Mammary epithelial cell (primary cell): ENCODE measurements at regions of chr1 and their contacts with region 1.

Region 1: GRCh38 chr1:28602536-28603439 is 10.7 kb downstream of the RAB42 start:
- DNase-seq: peak; percentile 78
- H3K4me3 ChIP-seq: no peak overlapping the region
- H3K27ac ChIP-seq: peak overlapping the region; percentile 63
- H3K4me1 ChIP-seq: peaks cover 27% of the 10 kb centered on the region
- H3K27me3 ChIP-seq: no peaks in the 10 kb centered on the region
- CTCF ChIP-seq: peak; percentile 66 to 76

Region 2: DNA sequence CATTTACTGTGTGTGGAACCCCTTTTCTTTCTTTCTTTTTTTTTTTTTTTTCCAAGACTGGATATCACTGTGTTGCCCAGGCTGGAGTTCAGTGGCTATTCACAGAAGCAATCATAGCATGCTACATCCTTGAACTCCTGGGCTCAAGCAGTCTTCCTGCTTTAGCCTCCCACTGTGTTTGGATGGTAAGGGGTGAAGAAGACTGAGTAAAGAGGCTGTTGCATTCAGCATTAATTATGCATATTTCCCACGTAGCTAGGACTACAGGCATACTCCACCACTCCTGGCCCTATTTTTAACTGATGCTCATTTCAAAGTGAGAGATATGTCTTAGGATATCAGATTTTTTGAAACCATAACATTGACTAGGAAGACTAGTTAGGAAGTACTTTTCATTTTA is 193.7 kb before region 1 on chr1:
- CTCF ChIA-PET with region 1: no interaction called
- dilution Hi-C with region 1: loop called (anchors 5 kb)
- in situ Hi-C with region 1: loop called in 1 of 2 experiments (anchors 10 kb)
- intact Hi-C with region 1: loop called (anchors 1 kb)
- DNase-seq: no peak
- H3K4me3 ChIP-seq: no peak overlapping the region
- H3K27ac ChIP-seq: no peak overlapping the region
- H3K4me1 ChIP-seq: no peaks in the 10 kb centered on the region
- H3K27me3 ChIP-seq: no peaks in the 10 kb centered on the region
- CTCF ChIP-seq: no peak

Region 3: DNA sequence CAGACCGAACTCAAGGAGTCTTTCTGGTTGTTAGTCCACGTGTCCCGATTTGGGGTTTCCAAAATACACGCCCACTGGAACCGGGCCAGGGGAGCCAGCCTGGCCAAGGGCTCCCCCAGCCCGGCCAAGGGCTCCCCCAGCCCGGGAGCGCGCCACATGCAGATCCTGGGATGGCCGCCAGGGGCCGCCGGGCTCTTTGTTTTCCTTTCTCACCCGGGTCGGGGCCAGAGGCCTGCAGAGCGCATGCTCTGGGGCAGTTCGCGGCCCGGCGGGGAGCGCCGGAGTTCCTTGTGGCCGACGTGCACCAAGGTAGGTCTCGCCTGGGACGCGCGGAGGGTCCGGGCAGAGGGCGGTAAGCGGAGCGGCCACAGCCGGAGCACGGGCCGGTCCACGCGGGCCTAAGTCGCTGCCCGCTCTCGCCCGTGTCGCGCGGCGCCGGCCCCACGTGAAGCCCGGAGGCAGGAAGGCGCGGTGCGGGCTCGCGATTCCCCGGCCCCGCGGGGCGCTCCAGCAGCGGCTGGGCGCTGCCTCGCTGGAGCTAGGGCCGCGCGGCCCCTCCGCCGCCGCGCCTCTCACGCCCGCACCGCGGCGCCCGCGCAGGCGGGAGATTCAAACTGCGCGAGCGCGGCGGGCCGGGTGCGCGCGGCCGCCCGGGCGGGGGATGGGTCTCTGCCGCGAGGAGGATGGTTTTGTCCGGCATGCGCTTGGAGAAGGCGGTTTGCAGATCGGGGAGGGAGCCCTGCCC is 84.6 kb before region 1 on chr1:
- CTCF ChIA-PET with region 1: interaction called, 14 read pairs
- dilution Hi-C with region 1: no loop called
- in situ Hi-C with region 1: loop called in 1 of 2 experiments (anchors 5 kb)
- intact Hi-C with region 1: loop called (anchors 1 kb)
- DNase-seq: peak; percentile 85
- H3K4me3 ChIP-seq: peak overlapping the region; percentile 60 to 68 (median 61)
- H3K27ac ChIP-seq: peak overlapping the region; percentile 57
- H3K4me1 ChIP-seq: peaks cover 12% of the 10 kb centered on the region
- H3K27me3 ChIP-seq: no peaks in the 10 kb centered on the region
- CTCF ChIP-seq: peak; percentile 63 to 98

Region 4: GRCh38 chr1:28528356-28528755 is 74.4 kb before region 1 on chr1:
- CTCF ChIA-PET with region 1: no interaction called
- dilution Hi-C with region 1: no loop called
- in situ Hi-C with region 1: no loop called
- intact Hi-C with region 1: no loop called
- DNase-seq: no peak
- H3K4me3 ChIP-seq: no peak overlapping the region
- H3K27ac ChIP-seq: no peak overlapping the region
- H3K4me1 ChIP-seq: no peaks in the 10 kb centered on the region
- H3K27me3 ChIP-seq: no peaks in the 10 kb centered on the region
- CTCF ChIP-seq: no peak

Region 5: GRCh38 chr1:28581536-28582247 is 21.1 kb before region 1 on chr1:
- CTCF ChIA-PET with region 1: interaction called, 5 read pairs
- dilution Hi-C with region 1: no loop called
- in situ Hi-C with region 1: no loop called
- intact Hi-C with region 1: loop called (anchors 2 kb)
- DNase-seq: peak; percentile 95
- H3K4me3 ChIP-seq: peak overlapping the region; percentile 73 to 96 (median 88)
- H3K27ac ChIP-seq: peak overlapping the region; percentile 87
- H3K4me1 ChIP-seq: peaks cover 23% of the 10 kb centered on the region
- H3K27me3 ChIP-seq: no peaks in the 10 kb centered on the region
- CTCF ChIP-seq: peak in 1 of 2 donors; percentile 2

Region 6: DNA sequence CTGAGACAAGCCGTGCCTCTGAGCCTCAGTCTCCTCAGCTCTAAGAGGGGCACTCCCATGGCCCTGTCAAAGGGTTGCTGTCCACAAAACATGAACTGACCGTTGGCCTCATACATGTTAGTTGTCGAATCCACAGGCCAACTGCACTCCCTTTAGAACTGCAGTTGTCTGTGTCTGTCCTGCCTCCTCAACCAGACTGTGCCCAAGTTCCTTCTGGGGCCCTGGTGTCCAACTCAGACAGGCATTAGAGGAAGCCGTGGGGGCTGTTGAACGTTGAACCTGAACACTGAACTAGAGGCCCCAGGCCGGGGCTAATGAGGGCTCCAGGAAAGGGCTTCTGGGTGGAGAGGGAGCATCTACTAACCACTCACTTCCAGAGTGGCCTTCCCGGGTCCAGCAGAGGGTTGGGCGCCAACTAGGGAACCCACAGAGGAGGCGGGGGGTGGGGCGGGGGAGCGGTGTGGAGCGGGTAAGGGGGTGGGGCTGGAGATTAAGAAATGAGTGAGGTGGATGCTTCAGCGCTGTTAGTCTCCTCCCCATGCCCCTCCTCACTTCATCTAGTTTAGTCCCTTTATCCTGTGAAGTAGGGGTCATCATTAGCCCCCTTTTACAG is 11.0 kb before region 1 on chr1 and contains the start of gene RAB42:
- CTCF ChIA-PET with region 1: no interaction called
- dilution Hi-C with region 1: no loop called
- in situ Hi-C with region 1: no loop called
- intact Hi-C with region 1: no loop called
- DNase-seq: no peak
- H3K4me3 ChIP-seq: peak within 1 kb of the TSS in 2 of 3 experiments; percentile 7 to 12
- H3K27ac ChIP-seq: no peak within 1 kb of the TSS
- H3K4me1 ChIP-seq: peaks cover 8% of the 10 kb centered on the region
- H3K27me3 ChIP-seq: no peaks in the 10 kb centered on the region
- CTCF ChIP-seq: no peak
- total RNA-seq, gene RAB42: 0.17 TPM in 1 of 2 donors, not detected in the other

Region 7: DNA sequence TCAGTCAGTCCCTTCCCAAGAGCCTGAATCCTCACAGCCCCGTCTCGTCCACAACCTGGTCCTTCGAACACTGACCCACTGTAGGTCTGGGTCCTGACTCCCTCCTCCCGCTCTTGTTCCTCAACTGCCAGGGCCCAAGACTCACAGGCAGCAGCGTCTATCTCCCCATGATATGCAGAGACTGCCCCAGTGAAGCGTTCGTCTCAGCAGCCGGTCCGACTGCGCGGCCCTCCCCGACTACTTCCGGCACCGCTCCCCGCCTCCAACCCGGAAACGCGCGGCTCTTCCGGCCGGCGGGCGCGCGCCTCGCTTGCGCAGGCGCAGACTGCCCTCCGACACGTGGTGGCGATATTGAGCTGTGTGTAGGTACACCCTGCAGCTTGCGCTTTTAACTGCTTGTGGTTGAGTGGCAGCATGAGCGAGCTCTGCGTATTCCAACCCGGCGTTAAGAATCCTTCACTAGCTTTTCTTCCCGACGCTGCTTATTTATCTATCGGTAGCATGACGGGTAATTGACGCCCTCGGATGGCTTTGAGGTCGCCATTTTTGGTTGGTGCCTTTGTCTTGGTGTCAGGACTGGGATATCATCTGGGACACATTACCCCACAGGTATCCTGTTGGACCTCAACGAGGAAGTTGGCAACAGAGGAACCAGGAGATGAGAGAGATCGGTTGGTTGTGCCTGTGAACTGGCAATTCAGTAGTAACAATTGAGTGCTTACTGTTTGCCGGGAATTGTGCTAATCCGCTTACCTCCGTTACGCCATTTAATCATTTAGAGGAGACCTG is 40.3 kb after region 1 on chr1 and contains the start of gene TAF12:
- CTCF ChIA-PET with region 1: no interaction called
- dilution Hi-C with region 1: no loop called
- in situ Hi-C with region 1: no loop called
- intact Hi-C with region 1: no loop called
- DNase-seq: peak; percentile 97
- H3K4me3 ChIP-seq: peak within 1 kb of the TSS; percentile 52 to 72 (median 70)
- H3K27ac ChIP-seq: peak within 1 kb of the TSS; percentile 79
- H3K4me1 ChIP-seq: peaks cover 15% of the 10 kb centered on the region
- H3K27me3 ChIP-seq: no peaks in the 10 kb centered on the region
- CTCF ChIP-seq: peak in 1 of 2 donors; percentile 55
- total RNA-seq, gene TAF12: 22.0 to 27.1 TPM

Region 8: GRCh38 chr1:28815533-28816185 is 212.9 kb after region 1 on chr1:
- CTCF ChIA-PET with region 1: no interaction called
- dilution Hi-C with region 1: loop called (anchors 5 kb)
- in situ Hi-C with region 1: no loop called
- intact Hi-C with region 1: no loop called
- DNase-seq: no peak
- H3K4me3 ChIP-seq: no peak overlapping the region
- H3K27ac ChIP-seq: no peak overlapping the region
- H3K4me1 ChIP-seq: peaks cover 4% of the 10 kb centered on the region
- H3K27me3 ChIP-seq: peaks cover 21% of the 10 kb centered on the region
- CTCF ChIP-seq: no peak